CD4-positive, alpha-beta T cell (primary cell): ENCODE measurements at regions of chr2 and their contacts with region 1.

Region 1: DNA sequence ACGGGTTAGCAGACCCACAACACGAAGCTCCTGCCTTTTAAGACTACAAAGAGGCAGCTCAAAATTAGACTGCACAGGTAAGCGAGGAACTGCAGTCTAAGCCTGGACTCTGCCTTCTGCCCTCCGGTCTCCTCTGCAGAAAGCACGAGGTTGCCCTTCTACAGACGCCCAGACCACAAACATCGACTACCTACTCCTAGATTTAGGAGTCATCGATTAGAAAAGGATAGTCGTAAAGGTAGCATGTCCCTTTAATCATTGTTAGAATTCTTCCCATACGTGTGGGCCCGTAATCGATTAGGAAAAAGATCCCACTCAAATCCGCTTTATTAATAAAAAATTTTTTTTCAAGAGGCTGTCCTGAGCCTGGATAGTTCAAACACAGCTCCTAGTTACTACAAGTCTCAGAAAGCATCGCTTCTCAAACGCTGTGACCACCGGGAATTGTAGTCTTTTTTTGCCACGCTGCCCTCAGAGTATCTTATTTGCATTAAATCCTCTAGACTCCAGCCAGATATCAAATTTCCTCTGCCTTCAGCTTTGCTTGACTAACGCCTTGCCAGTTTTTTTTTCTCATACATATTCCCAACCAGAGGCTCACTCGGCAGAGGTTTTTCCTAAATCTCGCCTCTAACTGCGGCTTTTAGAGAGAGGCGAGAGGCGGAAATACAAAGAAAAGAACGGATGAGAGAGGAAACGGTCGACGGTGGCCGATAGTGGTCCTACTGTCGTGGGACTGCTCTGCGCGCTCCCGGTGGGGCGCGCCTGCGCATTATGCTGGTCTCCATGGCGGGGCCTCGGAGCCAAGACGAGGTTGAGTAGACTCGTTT is at the starts of genes CARF and WDR12:
- DNase-seq: peak; percentile 80 to 95 (median 86)
- ATAC-seq: peak; percentile 81
- H3K4me3 ChIP-seq: peak within 1 kb of the TSS; percentile 79
- H3K4me3 Mint-ChIP-seq: peak within 1 kb of the TSS; percentile 98
- H3K27ac ChIP-seq: peak within 1 kb of the TSS; percentile 72 to 85
- H3K27ac Mint-ChIP-seq: peak within 1 kb of the TSS; percentile 90
- H3K4me1 ChIP-seq: peaks cover 9% of the 10 kb centered on the region
- H3K4me1 Mint-ChIP-seq: peaks cover 40% of the 10 kb centered on the region
- H3K27me3 ChIP-seq: no peaks in the 10 kb centered on the region
- H3K27me3 Mint-ChIP-seq: no peaks in the 10 kb centered on the region
- CTCF ChIP-seq: no peak
- total RNA-seq, gene CARF: 9.0 to 9.6 TPM
- total RNA-seq, gene WDR12: 6.2 to 7.7 TPM

Region 2: GRCh38 chr2:202870431-202871299 is 41.1 kb before region 1 on chr2:
- CTCF ChIA-PET with region 1: interaction called, 6 read pairs
- POLR2A ChIA-PET with region 1: interaction called, 17 read pairs
- intact Hi-C with region 1: no loop called
- DNase-seq: peak; percentile 39 to 75 (median 56)
- ATAC-seq: peak; percentile 81
- H3K4me3 ChIP-seq: peak overlapping the region; percentile 84
- H3K4me3 Mint-ChIP-seq: peak overlapping the region; percentile 95
- H3K27ac ChIP-seq: no peak overlapping the region
- H3K27ac Mint-ChIP-seq: peak overlapping the region; percentile 26
- H3K4me1 ChIP-seq: peaks cover 6% of the 10 kb centered on the region
- H3K4me1 Mint-ChIP-seq: peaks cover 13% of the 10 kb centered on the region
- H3K27me3 ChIP-seq: no peaks in the 10 kb centered on the region
- H3K27me3 Mint-ChIP-seq: no peaks in the 10 kb centered on the region
- CTCF ChIP-seq: peak; percentile 67

Region 3: GRCh38 chr2:202932425-202933138 is 20.9 kb after region 1 on chr2:
- CTCF ChIA-PET with region 1: no interaction called
- POLR2A ChIA-PET with region 1: no interaction called
- intact Hi-C with region 1: no loop called
- DNase-seq: no peak
- ATAC-seq: no peak
- H3K4me3 ChIP-seq: no peak overlapping the region
- H3K4me3 Mint-ChIP-seq: no peak overlapping the region
- H3K27ac ChIP-seq: no peak overlapping the region
- H3K27ac Mint-ChIP-seq: no peak overlapping the region
- H3K4me1 ChIP-seq: no peaks in the 10 kb centered on the region
- H3K4me1 Mint-ChIP-seq: peaks cover 4% of the 10 kb centered on the region
- H3K27me3 ChIP-seq: no peaks in the 10 kb centered on the region
- H3K27me3 Mint-ChIP-seq: no peaks in the 10 kb centered on the region
- CTCF ChIP-seq: no peak

Region 4: DNA sequence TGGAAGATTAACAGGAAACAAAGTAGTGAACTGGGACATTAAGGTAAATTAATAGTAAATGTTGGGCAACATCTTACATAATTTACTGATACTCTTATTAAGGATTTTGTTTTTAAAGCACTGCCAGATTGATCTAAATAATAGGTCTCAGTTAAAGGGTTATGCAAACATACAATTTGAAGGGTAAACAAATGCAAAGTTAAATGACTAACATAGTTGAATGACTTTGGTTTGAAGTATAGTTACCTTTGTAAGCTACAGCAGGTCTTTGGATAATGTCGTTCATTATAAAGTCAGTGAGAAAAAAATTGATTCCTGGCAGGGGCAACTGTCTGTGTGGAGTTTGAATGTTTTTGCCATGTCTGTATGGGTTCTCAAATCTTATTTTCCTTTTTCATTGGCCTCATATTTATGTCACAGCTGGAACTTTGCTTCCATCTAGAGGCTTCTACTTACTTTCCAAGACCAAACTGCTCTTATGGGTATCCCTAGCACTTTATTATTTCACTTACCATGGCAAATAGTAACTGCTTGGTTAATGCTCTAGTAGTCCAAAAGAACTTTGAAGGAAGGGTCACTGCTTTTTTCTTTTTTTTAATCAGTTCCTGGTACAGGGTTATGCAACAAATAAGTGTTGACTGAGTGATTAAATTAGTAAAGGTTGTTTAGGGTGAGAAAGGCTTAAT is 210.7 kb after region 1 on chr2:
- CTCF ChIA-PET with region 1: no interaction called
- POLR2A ChIA-PET with region 1: no interaction called
- intact Hi-C with region 1: no loop called
- DNase-seq: peak in 2 of 14 experiments; percentile 1 to 10
- ATAC-seq: no peak
- H3K4me3 ChIP-seq: no peak overlapping the region
- H3K4me3 Mint-ChIP-seq: no peak overlapping the region
- H3K27ac ChIP-seq: no peak overlapping the region
- H3K27ac Mint-ChIP-seq: no peak overlapping the region
- H3K4me1 ChIP-seq: no peaks in the 10 kb centered on the region
- H3K4me1 Mint-ChIP-seq: no peaks in the 10 kb centered on the region
- H3K27me3 ChIP-seq: no peaks in the 10 kb centered on the region
- H3K27me3 Mint-ChIP-seq: no peaks in the 10 kb centered on the region
- CTCF ChIP-seq: no peak